MCF 10A (cell line): ENCODE measurements at regions of chr4 and their contacts with region 1.

Region 1: GRCh38 chr4:173334085-173334772 is at the start of gene HMGB2:
- DNase-seq: peak; percentile 100
- H3K4me3 Mint-ChIP-seq: peak within 1 kb of the TSS; percentile 99
- H3K27ac Mint-ChIP-seq: peak within 1 kb of the TSS; percentile 100
- H3K4me1 Mint-ChIP-seq: peaks cover 14% of the 10 kb centered on the region
- H3K27me3 Mint-ChIP-seq: no peaks in the 10 kb centered on the region
- CTCF ChIP-seq: no peak
- total RNA-seq, gene HMGB2: 124 and 176 TPM in 2 replicates

Region 2: GRCh38 chr4:172998527-172999469 is 335.4 kb before region 1 on chr4:
- CTCF ChIA-PET with region 1: no interaction called
- POLR2A ChIA-PET with region 1: interaction called, 12 read pairs
- intact Hi-C with region 1: no loop called
- DNase-seq: peak; percentile 77
- H3K4me3 Mint-ChIP-seq: peak overlapping the region; percentile 15
- H3K27ac Mint-ChIP-seq: peak overlapping the region; percentile 60
- H3K4me1 Mint-ChIP-seq: peaks cover 52% of the 10 kb centered on the region
- H3K27me3 Mint-ChIP-seq: peaks cover 7% of the 10 kb centered on the region
- CTCF ChIP-seq: no peak

Region 3: DNA sequence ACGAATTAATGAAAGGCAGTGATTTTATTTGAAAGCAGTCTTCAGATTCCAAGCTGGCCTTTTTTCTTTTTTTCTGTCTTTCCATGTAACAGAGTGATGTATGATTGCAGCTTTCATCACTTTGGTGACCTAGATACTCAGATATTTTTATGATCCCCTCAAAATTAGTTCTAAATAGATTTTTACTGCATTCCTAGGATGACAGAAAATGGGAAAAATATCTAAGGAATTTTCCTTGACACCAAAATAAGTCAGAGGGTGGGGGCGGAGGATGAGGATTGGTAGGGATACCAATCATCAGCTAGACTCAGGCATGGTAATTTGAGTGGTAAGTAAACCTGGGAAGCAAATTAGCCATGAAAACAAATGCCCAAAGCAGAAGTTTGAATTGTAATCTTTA is 11.8 kb after region 1 on chr4:
- CTCF ChIA-PET with region 1: no interaction called
- POLR2A ChIA-PET with region 1: interaction called, 37 read pairs
- intact Hi-C with region 1: no loop called
- DNase-seq: no peak
- H3K4me3 Mint-ChIP-seq: no peak overlapping the region
- H3K27ac Mint-ChIP-seq: no peak overlapping the region
- H3K4me1 Mint-ChIP-seq: no peaks in the 10 kb centered on the region
- H3K27me3 Mint-ChIP-seq: no peaks in the 10 kb centered on the region
- CTCF ChIP-seq: no peak

Region 4: GRCh38 chr4:173370477-173371291 is 36.5 kb after region 1 on chr4 and contains the start of gene SAP30:
- CTCF ChIA-PET with region 1: interaction called, 63 read pairs
- POLR2A ChIA-PET with region 1: interaction called, 824 read pairs
- intact Hi-C with region 1: loop called (anchors 1 kb)
- DNase-seq: peak; percentile 98
- H3K4me3 Mint-ChIP-seq: peak within 1 kb of the TSS; percentile 96
- H3K27ac Mint-ChIP-seq: peak within 1 kb of the TSS; percentile 96
- H3K4me1 Mint-ChIP-seq: peaks cover 20% of the 10 kb centered on the region
- H3K27me3 Mint-ChIP-seq: no peaks in the 10 kb centered on the region
- CTCF ChIP-seq: no peak
- total RNA-seq, gene SAP30: 17.6 and 30.6 TPM in 2 replicates

Region 5: GRCh38 chr4:173380987-173381386 is 46.8 kb after region 1 on chr4:
- CTCF ChIA-PET with region 1: no interaction called
- POLR2A ChIA-PET with region 1: interaction called, 824 read pairs
- intact Hi-C with region 1: no loop called
- DNase-seq: no peak
- H3K4me3 Mint-ChIP-seq: no peak overlapping the region
- H3K27ac Mint-ChIP-seq: no peak overlapping the region
- H3K4me1 Mint-ChIP-seq: no peaks in the 10 kb centered on the region
- H3K27me3 Mint-ChIP-seq: no peaks in the 10 kb centered on the region
- CTCF ChIP-seq: no peak

Region 6: GRCh38 chr4:173538148-173538908 is 204.1 kb after region 1 on chr4:
- CTCF ChIA-PET with region 1: no interaction called
- POLR2A ChIA-PET with region 1: no interaction called
- intact Hi-C with region 1: no loop called
- DNase-seq: no peak
- H3K4me3 Mint-ChIP-seq: no peak overlapping the region
- H3K27ac Mint-ChIP-seq: no peak overlapping the region
- H3K4me1 Mint-ChIP-seq: no peaks in the 10 kb centered on the region
- H3K27me3 Mint-ChIP-seq: peaks cover 86% of the 10 kb centered on the region
- CTCF ChIP-seq: no peak